Heart right ventricle (tissue), 16 donors: ENCODE measurements at regions of chr5 and their contacts with region 1.

Region 1: DNA sequence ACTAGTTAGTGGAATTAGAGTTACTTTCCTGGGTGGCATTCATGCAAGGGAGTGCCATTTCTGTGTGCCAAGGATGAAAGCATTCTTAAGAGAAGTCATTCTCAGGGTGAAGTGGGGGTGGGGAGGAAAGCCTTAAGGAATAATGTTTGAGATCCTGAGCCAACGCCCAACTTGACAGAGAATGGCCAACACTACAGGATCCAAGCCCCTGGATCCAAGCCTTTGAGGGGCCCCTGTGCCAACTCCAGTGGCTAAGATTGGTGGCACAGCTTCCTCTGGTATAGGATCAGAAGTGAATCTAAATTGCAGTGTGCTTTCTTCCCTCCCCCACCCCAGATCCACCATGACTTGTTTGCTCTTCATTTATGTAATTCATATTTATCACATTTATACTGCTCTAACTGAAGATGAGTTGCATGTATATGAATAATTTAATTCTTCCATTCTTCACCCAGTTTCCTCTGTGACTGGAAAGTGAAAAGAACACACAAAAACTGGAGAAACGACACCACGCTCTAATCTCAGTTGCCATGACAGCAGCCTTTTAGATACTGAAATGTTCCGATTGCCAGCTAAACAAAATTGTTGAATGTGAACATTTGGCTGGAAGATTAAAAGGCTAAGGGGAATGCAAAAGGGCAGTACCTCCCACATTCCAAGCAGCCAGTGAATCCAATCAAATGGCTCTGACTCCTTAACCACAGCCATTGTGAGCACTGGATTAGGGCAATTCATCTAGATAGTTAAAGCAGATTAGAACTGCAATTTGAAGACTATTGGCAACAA is 4.5 kb downstream of the ZNF608 start:
- DNase-seq: no peak
- ATAC-seq: no peak
- H3K4me3 ChIP-seq: peak overlapping the region in 6 of 10 donors; percentile 9 to 81 (median 73)
- H3K27ac ChIP-seq: peak overlapping the region in 2 of 10 donors; percentile 94 to 98
- H3K4me1 ChIP-seq: peaks cover 7 to 90% (median 58%) of the 10 kb centered on the region in 9 donors
- H3K27me3 ChIP-seq: peaks cover 0 to 28% (median 0%) of the 10 kb centered on the region in 7 donors
- CTCF ChIP-seq: no peak

Region 2: DNA sequence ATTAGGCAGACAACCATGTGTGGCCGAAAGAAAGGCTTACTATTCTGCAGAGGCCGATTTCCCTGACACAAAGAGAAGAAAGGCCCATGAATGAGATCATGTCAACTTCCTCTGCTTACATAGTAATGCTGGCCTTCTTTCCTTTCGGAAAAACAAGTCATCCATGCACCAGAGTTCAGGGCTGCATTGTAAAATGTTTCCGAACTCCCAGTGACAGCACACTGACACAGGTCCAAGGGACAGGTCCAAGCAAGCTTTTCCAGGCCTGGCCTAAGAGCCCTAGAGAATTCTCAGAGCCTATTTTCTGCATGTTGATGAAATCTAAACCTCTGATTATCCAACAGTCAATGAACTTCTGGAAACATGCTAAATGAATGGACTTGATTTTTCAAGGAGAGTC is 136.4 kb before region 1 on chr5:
- intact Hi-C with region 1: loop called in 1 of 10 experiments (anchors 5 kb)
- DNase-seq: peak in 1 of 2 donors; percentile 75
- ATAC-seq: peak; percentile 85 to 97 (median 96)
- H3K4me3 ChIP-seq: no peak overlapping the region
- H3K27ac ChIP-seq: peak overlapping the region; percentile 0 to 74 (median 51)
- H3K4me1 ChIP-seq: peaks cover 0 to 34% (median 26%) of the 10 kb centered on the region in 9 donors
- H3K27me3 ChIP-seq: no peaks in the 10 kb centered on the region
- CTCF ChIP-seq: no peak

Region 3: GRCh38 chr5:124655922-124656511 is 85.9 kb before region 1 on chr5:
- intact Hi-C with region 1: loop called in 8 of 10 experiments (anchors 2 to 10 kb)
- DNase-seq: no peak
- ATAC-seq: peak in 6 of 8 donors; percentile 24 to 78 (median 58)
- H3K4me3 ChIP-seq: peak overlapping the region in 4 of 10 donors; percentile 12 to 23 (median 16)
- H3K27ac ChIP-seq: peak overlapping the region in 9 of 10 donors; percentile 8 to 73 (median 56)
- H3K4me1 ChIP-seq: peaks cover 3 to 92% (median 63%) of the 10 kb centered on the region in 9 donors
- H3K27me3 ChIP-seq: peaks cover 0 to 79% (median 0%) of the 10 kb centered on the region in 7 donors
- CTCF ChIP-seq: no peak

Region 4: DNA sequence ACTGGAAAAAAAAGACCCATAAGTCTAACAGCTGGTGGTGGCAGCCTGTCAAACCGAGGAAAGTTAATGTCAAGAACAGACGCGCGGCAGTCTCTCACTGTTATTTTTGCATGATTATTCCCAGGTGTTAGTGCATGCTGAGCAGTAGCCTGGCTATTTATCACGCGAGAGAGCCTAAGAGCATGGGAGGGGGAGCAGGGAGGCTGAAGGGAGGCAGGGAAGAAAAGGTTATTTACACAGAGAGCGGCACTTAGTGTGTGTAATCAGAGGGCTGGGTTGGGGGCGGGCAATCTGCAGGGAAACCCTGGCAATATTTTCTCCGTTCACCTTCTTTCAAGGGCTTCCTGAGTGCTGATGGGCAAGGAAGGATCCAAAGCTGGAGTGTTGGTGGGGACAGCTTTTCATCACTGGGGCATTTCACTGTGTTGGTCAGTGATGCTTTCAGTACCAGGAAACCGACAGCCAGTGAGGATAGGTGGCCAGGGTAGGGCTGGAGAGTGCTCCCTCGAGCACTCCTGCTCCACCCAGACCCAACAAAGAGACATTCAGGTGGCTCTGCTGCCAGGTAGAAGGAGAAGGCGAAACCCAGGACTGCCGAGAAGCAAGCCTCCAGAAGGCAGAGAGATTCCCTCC is 35.1 kb before region 1 on chr5:
- intact Hi-C with region 1: loop called in 3 of 10 experiments (anchors 5 kb)
- DNase-seq: peak; percentile 27 to 68
- ATAC-seq: peak; percentile 64 to 79 (median 72)
- H3K4me3 ChIP-seq: peak overlapping the region in 5 of 10 donors; percentile 12 to 28 (median 21)
- H3K27ac ChIP-seq: peak overlapping the region in 7 of 10 donors; percentile 2 to 62 (median 15)
- H3K4me1 ChIP-seq: peaks cover 5 to 88% (median 57%) of the 10 kb centered on the region in 9 donors
- H3K27me3 ChIP-seq: no peaks in the 10 kb centered on the region
- CTCF ChIP-seq: no peak

Region 5: GRCh38 chr5:124796495-124796894 is 54.6 kb after region 1 on chr5:
- intact Hi-C with region 1: no loop called
- DNase-seq: no peak
- ATAC-seq: no peak
- H3K4me3 ChIP-seq: no peak overlapping the region
- H3K27ac ChIP-seq: no peak overlapping the region
- H3K4me1 ChIP-seq: peaks cover 0 to 6% (median 0%) of the 10 kb centered on the region in 9 donors
- H3K27me3 ChIP-seq: no peaks in the 10 kb centered on the region
- CTCF ChIP-seq: no peak